ENCODE measurements at regions of chr2 and their contacts with region 1.

Region 1: DNA sequence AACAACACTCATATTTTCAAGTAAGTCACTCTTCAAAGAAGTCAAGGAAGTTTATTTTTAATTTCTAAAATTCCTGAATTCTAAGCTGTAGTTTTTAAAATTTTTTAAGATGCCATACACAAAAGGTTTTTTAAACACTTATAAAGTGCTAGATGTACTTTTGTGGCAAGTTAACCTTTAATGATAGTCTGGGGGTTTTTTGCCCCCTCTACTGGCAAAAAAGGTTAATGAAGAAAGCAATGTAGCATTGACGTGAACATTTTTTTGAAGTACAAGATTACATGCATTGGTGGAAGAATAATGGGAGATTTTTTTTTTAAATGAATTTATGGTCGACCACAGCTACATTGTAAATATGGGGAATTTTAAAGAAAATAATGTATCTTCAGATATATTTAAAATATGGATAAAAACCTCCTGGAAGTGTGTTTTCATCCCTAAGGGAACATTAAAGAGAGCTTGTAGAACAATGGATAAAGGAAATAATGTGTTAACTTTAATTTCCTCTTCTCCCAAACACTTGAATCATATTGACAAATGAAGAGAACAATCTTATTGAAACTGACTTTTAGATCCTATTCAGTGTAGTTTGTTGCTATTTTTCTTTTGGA is 12.6 kb downstream of the ITPRID2 start:
- DNase-seq: peak; percentile 29
- ATAC-seq: no peak
- H3K4me3 Mint-ChIP-seq: no peak overlapping the region
- H3K27ac Mint-ChIP-seq: no peak overlapping the region
- H3K4me1 Mint-ChIP-seq: peaks cover 22% of the 10 kb centered on the region
- H3K27me3 Mint-ChIP-seq: no peaks in the 10 kb centered on the region

Region 2: DNA sequence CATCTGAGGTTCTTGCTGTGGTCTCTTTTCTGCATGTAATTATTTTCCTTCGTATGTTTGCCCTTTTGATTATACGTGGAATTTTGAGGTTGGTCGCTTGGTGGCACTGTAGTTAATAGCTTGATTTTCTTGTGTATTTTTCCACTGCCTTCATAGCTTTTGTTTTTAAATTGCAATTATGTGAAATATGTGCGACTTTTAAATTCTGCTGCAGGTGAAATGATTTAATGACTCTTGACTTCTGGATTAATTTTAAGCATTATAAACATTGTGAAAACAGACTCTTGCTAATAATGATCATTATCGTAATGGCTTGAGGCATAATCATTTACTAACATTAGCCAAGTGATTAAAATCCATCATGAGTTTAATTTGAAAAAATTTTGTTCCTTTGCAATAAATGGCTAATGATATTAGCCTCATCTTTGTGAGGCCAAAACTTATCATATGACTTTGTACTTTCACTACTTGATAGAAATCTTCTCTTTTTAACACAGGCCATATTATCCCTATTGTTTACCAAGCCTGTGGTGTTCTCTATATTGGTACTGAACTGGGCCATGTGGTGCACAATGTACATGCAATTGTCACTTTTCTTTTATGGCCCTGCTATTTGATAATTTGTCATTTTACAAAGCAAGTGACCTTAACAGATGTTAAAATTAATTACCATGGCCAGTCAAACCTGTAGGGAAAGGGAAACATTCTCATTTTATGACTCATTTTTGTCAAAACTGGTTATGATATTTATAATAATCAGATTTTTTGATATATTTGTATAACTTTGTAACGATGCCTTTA is 161.0 kb before region 1 on chr2:
- CTCF ChIA-PET with region 1: interaction called, 31 read pairs
- POLR2A ChIA-PET with region 1: no interaction called
- DNase-seq: peak; percentile 54
- ATAC-seq: no peak
- H3K4me3 Mint-ChIP-seq: no peak overlapping the region
- H3K27ac Mint-ChIP-seq: no peak overlapping the region
- H3K4me1 Mint-ChIP-seq: no peaks in the 10 kb centered on the region
- H3K27me3 Mint-ChIP-seq: peaks cover 12% of the 10 kb centered on the region

Region 3: DNA sequence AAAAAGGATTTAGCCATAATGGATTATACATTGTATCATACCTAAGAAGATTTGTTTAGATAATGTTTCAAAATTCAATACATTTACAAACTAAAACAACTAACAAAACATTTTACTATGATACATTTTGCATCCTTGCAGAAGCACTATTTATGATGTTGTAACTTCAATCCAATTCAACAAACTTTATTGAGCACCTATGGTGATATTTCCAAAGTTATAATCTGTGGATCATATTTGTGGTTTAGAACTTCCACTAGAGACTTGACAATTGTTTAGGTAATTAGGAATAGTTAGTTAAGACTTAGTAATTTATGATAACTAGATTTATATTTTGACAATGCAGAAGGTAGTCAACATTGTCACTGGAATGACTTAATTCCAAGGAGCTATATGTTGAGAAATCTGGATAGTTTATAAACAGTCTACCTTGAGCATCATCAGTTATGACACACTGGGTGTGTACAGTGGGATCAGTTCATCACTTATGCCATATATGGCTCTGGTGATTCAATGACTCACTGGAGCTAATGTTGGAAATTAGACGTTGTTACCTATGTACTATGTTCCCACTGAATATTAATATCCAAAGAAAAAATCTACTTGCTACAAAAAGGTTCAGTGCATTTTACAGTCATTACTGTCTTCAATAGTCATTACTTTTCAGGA is 46.8 kb before region 1 on chr2:
- CTCF ChIA-PET with region 1: no interaction called
- POLR2A ChIA-PET with region 1: no interaction called
- DNase-seq: no peak
- ATAC-seq: no peak
- H3K4me3 Mint-ChIP-seq: no peak overlapping the region
- H3K27ac Mint-ChIP-seq: no peak overlapping the region
- H3K4me1 Mint-ChIP-seq: no peaks in the 10 kb centered on the region
- H3K27me3 Mint-ChIP-seq: peaks cover 5% of the 10 kb centered on the region

Region 4: DNA sequence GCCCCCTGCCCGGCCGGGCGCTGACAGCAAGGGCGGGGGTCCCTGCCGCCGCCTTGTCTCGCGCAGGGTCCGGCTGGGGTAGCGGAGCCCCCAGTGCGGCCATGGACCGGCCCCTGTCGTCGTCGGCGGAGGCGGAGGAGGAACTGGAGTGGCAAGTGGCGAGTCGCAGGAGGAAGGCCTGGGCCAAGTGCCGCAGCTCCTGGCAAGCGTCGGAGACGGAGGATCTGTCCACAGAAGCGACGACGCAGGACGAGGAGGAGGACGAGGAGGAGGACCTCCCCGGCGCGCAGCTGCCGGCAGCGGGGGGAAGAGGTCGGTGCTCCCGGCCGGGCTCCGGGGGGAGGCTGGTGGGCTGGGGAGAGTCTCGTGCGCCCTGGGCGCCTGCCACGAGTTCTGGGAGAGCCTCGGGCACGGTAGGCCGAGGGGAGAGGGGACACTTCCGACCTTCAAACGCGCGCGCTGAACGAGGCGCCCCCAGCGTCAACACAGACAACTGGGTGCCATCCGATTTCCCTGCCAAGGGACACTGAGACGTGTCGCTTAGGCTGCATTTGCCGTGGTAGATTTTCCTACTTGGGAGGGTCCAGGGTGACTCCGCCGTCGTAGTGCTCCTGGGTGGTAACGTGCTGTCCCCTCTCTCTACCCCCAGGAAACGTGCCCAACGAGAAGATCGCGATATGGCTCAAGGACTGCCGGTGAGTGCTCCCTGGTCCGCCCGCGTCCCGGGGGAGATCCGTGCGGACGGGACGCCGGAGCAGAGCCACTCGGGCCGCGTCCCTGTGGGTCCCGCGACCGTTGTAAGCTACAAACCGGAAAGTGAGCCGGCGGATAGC is 11.9 kb before region 1 on chr2:
- CTCF ChIA-PET with region 1: interaction called, 10 read pairs
- POLR2A ChIA-PET with region 1: interaction called, 3 read pairs
- DNase-seq: peak; percentile 75
- ATAC-seq: peak; percentile 72
- H3K4me3 Mint-ChIP-seq: peak overlapping the region; percentile 89
- H3K27ac Mint-ChIP-seq: peak overlapping the region; percentile 93
- H3K4me1 Mint-ChIP-seq: peaks cover 39% of the 10 kb centered on the region
- H3K27me3 Mint-ChIP-seq: peaks cover 17% of the 10 kb centered on the region

Region 5: DNA sequence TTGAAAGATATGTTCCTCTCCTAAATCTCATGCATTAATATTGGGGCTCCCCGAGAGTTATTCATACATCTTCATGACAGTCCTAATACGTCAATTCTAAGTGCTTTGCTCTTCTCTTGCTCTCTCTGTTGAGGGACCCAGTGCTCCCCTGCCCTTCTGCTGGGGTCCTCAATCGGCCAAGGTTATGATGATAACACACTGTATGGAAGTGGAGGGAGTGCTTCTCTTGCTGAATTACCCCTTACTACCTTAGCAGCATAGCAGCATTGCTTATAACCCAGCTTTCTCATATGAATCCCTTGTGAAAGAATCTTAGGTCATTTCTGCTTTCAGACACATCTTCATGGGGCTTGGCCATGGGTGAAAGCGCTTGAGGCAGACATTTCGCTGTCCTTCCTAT is 30.6 kb after region 1 on chr2:
- CTCF ChIA-PET with region 1: no interaction called
- POLR2A ChIA-PET with region 1: no interaction called
- DNase-seq: no peak
- ATAC-seq: no peak
- H3K4me3 Mint-ChIP-seq: no peak overlapping the region
- H3K27ac Mint-ChIP-seq: no peak overlapping the region
- H3K4me1 Mint-ChIP-seq: no peaks in the 10 kb centered on the region
- H3K27me3 Mint-ChIP-seq: peaks cover 9% of the 10 kb centered on the region

Region 6: GRCh38 chr2:181953881-181954537 is 49.9 kb after region 1 on chr2:
- CTCF ChIA-PET with region 1: interaction called, 10 read pairs
- POLR2A ChIA-PET with region 1: no interaction called
- DNase-seq: peak; percentile 78
- ATAC-seq: peak; percentile 79
- H3K4me3 Mint-ChIP-seq: peak overlapping the region; percentile 54
- H3K27ac Mint-ChIP-seq: no peak overlapping the region
- H3K4me1 Mint-ChIP-seq: peaks cover 12% of the 10 kb centered on the region
- H3K27me3 Mint-ChIP-seq: peaks cover 13% of the 10 kb centered on the region

Region 7: GRCh38 chr2:182006606-182007005 is 102.5 kb after region 1 on chr2:
- CTCF ChIA-PET with region 1: no interaction called
- POLR2A ChIA-PET with region 1: no interaction called
- DNase-seq: no peak
- ATAC-seq: no peak
- H3K4me3 Mint-ChIP-seq: no peak overlapping the region
- H3K27ac Mint-ChIP-seq: no peak overlapping the region
- H3K4me1 Mint-ChIP-seq: no peaks in the 10 kb centered on the region
- H3K27me3 Mint-ChIP-seq: no peaks in the 10 kb centered on the region